Endothelial cell of umbilical vein (primary cell): ENCODE measurements at regions of chr1 and their contacts with region 1.

Region 1: DNA sequence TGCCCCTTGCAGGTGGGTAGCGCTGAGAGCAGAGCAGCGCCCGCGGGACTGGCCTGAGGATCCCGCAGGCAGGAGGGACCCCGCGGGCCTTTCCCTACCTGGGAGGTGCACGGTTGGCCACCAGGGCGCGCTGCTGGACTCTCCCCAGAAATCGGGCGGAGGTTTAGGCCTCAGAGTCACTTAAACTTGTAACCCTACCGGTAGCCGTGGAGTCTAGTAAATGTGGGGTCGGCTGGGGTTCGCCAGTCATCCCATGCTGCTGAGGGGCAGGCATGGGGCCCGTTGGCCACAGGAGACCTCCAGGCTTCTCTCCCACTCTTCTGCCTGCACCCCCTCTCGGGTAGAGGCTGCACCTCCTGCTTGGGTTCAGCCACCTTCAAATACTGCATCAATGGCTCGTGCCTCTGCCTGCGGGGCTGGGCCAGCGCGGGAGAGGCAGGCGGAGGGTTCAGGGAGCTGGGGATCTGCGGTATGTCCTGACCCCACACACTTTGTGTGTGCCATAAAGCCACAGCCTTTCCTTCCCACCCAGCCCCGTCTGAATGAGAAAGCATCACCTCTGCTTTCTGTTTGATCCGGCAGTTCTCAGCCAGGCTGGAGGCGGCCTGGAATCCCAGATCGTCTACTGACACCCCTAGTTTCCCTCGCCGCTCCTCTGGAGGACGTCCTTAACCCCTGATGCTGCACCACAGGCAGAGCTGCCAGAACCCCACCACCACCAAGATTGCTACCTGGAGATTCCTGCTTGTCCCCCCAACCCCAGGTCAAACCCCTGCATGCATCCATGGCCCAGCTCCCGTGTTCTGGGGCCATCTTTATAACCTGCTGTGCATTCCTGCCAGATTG is 12.3 kb upstream of the GSTM4 start:
- DNase-seq: peak; percentile 63
- H3K4me3 ChIP-seq: no peak overlapping the region
- H3K27ac ChIP-seq: no peak overlapping the region
- H3K4me1 ChIP-seq: no peaks in the 10 kb centered on the region
- H3K27me3 ChIP-seq: no peaks in the 10 kb centered on the region
- CTCF ChIP-seq: peak; percentile 86 to 97
- POLR2A ChIP-seq: no peak

Region 2: GRCh38 chr1:109083923-109084322 is 559.7 kb before region 1 on chr1:
- CTCF ChIA-PET with region 1: no interaction called
- POLR2A ChIA-PET with region 1: no interaction called
- dilution Hi-C with region 1: no loop called
- intact Hi-C with region 1: no loop called
- DNase-seq: no peak
- H3K4me3 ChIP-seq: no peak overlapping the region
- H3K27ac ChIP-seq: no peak overlapping the region
- H3K4me1 ChIP-seq: peaks cover 9% of the 10 kb centered on the region
- H3K27me3 ChIP-seq: no peaks in the 10 kb centered on the region
- CTCF ChIP-seq: no peak
- POLR2A ChIP-seq: no peak

Region 3: GRCh38 chr1:109361649-109362048 is 282.0 kb before region 1 on chr1:
- CTCF ChIA-PET with region 1: no interaction called
- POLR2A ChIA-PET with region 1: no interaction called
- dilution Hi-C with region 1: no loop called
- intact Hi-C with region 1: no loop called
- DNase-seq: no peak
- H3K4me3 ChIP-seq: no peak overlapping the region
- H3K27ac ChIP-seq: no peak overlapping the region
- H3K4me1 ChIP-seq: no peaks in the 10 kb centered on the region
- H3K27me3 ChIP-seq: peaks cover 4 to 13% of the 10 kb centered on the region in 2 experiments
- CTCF ChIP-seq: no peak
- POLR2A ChIP-seq: no peak

Region 4: DNA sequence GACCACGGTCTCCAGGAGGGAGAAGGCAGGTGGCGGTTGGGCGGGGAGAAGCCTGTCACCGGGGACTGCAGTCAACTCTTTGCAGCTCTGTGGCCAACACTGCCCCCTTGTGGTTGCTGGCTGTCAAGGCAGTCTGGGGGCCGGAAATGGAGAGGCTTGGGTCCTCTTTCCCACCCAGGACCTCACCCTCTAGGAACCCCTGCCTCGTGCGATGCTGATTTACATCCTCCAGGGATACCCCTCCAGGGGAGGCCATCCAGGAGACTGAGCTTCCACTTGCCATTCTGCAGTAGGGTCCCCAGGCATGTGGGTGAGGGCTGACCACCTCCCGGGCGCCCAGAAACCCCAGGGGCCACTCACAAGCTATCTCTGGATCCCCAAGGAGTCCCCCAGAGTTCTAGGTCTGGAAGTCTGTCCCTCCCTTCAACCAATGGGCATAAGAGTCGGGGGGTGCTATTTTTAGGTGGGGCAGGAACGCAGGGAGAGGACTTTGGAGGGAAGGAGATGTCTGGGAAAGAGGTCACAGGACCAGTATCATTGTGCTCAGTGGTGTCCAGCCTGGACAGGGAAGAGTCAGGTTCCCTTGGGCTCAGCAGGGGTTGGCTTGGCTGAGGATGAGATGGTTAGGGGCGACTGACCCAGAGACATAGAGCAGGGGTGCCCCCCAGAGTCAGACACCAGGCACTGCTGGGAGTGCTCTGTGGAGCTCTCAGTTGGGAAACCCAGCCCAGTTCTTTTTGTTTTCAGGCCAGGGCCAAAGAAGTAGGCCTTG is 111.1 kb before region 1 on chr1:
- CTCF ChIA-PET with region 1: interaction called, 42 read pairs
- POLR2A ChIA-PET with region 1: no interaction called
- dilution Hi-C with region 1: no loop called
- intact Hi-C with region 1: no loop called
- DNase-seq: peak; percentile 67
- H3K4me3 ChIP-seq: no peak overlapping the region
- H3K27ac ChIP-seq: no peak overlapping the region
- H3K4me1 ChIP-seq: peaks cover 4% of the 10 kb centered on the region
- H3K27me3 ChIP-seq: peaks cover under 1 to 4% of the 10 kb centered on the region in 2 experiments
- CTCF ChIP-seq: peak; percentile 86 to 97
- POLR2A ChIP-seq: no peak

Region 5: GRCh38 chr1:109570417-109570827 is 73.2 kb before region 1 on chr1:
- CTCF ChIA-PET with region 1: interaction called, 16 read pairs
- POLR2A ChIA-PET with region 1: no interaction called
- dilution Hi-C with region 1: no loop called
- intact Hi-C with region 1: no loop called
- DNase-seq: peak; percentile 24
- H3K4me3 ChIP-seq: no peak overlapping the region
- H3K27ac ChIP-seq: no peak overlapping the region
- H3K4me1 ChIP-seq: peaks cover 12% of the 10 kb centered on the region
- H3K27me3 ChIP-seq: no peaks in the 10 kb centered on the region
- CTCF ChIP-seq: no peak
- POLR2A ChIP-seq: no peak

Region 6: DNA sequence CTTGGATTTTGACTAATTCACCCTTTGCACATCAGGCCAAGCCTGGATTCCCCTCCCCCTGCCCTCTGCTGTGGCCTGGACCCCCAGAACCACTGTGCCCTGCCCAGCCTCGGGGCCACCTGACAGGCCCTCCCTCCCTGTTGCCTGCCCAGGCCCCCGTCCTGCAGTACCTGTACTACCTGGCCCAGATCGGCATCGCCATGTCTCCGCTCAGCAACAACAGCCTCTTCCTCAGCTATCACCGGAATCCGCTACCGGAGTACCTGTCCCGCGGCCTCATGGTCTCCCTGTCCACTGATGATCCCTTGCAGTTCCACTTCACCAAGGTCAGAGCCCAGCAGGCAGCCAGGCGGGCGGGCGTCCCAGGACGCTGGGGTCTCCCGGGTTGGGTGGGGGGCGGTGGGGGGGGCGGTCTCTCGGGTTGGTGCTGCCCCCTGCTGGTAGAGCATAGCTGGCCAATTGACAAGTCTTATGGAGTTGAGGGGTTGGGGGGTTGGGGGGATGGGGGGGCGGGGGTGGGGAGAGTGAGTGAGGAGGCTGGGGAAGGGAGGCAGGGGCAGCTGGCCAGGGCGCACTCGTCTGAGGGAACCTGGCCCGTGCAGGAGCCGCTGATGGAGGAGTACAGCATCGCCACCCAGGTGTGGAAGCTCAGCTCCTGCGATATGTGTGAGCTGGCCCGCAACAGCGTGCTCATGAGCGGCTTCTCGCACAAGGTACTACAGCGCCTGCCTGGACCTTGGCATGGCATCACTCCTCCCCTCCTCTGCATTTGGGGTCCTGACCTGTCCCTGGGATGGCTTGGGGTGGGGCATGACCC is 13.3 kb before region 1 on chr1:
- CTCF ChIA-PET with region 1: interaction called, 66 read pairs
- POLR2A ChIA-PET with region 1: no interaction called
- dilution Hi-C with region 1: no loop called
- intact Hi-C with region 1: no loop called
- DNase-seq: no peak
- H3K4me3 ChIP-seq: no peak overlapping the region
- H3K27ac ChIP-seq: no peak overlapping the region
- H3K4me1 ChIP-seq: no peaks in the 10 kb centered on the region
- H3K27me3 ChIP-seq: no peaks in the 10 kb centered on the region
- CTCF ChIP-seq: peak in 1 of 2 donors; percentile 26
- POLR2A ChIP-seq: no peak

Region 7: DNA sequence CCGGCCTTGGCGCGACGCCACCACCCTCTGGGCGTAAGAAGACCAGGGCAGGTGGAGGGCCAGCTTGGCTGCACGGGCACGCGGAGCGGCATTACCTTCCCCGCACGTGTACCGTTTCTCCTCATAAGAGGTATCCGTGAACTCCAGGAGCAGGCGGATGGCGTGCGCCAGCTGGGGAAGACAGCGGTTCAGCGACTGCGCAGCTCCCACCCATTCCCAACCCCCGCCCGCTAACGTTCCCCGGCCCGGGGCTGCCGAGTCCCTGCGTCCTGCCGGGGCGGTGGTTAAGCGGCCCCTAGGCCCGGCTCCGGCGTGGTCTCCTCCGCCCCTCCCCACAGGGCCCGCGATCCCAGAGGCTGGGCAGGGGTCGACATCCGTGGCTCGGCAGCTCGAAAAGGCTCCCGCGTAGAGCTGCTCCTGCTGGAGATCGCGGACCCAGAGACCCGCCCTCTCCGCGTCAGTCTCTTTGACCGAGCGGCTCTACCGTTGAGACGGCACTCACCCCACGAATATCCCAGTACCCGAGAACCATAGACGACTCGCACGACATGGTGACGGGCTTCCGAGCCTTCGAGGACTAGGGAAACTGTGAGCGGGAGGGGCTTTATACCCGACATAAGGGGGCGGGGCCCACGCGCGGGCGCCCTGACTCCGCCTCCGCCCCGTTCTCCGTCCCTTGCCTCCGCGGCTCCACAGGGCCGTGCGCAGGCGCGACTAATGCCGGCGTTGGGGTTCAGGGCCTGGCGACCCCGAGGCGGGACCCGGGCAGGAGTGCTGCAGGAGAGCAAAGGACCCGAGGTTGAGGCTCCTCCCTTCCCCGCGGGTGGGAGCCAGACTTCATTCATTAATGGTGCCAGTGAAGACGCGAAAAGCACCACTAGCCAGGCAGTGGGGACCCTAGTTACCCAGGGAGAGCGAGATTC is 96.4 kb after region 1 on chr1:
- CTCF ChIA-PET with region 1: interaction called, 10 read pairs
- POLR2A ChIA-PET with region 1: interaction called, 5 read pairs
- dilution Hi-C with region 1: no loop called
- intact Hi-C with region 1: no loop called
- DNase-seq: peak; percentile 81
- H3K4me3 ChIP-seq: peak overlapping the region; percentile 41 to 69 (median 42)
- H3K27ac ChIP-seq: peak overlapping the region; percentile 17
- H3K4me1 ChIP-seq: peaks cover 12% of the 10 kb centered on the region
- H3K27me3 ChIP-seq: peaks cover 0 to 1% of the 10 kb centered on the region in 2 experiments
- CTCF ChIP-seq: no peak
- POLR2A ChIP-seq: peak; percentile 67

Region 8: DNA sequence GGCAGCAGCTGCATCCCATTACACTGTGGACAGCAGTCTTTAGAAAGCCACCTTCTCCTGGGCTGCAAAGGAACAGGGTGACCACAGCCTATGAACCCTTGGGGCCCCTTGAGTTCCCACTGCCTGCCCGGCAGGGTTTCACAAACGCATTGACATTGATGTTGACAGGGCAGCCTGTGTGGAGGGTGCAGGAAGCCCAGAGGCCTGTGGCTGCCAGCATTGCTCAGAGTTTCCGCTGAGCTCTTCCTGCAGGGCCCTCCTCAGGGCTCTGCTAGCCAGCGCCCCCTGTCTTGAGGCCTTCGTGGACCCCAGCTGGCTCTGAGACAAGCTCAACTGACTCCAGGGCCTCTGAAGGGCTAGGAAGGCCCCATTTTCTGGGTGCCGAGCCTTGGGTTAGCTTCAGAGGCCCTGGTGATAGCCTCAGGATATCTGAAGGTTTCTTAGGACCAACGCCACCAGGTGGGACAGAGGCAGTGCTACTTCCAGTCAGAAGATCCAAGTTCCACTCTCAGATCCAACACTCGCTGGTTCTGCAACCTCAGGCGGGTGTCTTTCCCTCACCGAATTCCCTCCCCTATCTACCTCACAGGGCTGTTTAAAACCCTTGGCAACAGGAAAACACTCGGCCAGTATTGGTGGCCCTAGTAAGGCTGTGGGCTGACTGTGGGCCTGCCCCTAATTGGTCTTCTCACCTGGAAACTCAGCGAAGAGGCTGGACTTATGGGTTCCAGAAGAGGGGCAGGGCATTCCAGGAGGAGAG is 147.3 kb after region 1 on chr1:
- CTCF ChIA-PET with region 1: interaction called, 22 read pairs
- POLR2A ChIA-PET with region 1: no interaction called
- dilution Hi-C with region 1: no loop called
- intact Hi-C with region 1: no loop called
- DNase-seq: peak; percentile 90
- H3K4me3 ChIP-seq: no peak overlapping the region
- H3K27ac ChIP-seq: peak overlapping the region; percentile 52
- H3K4me1 ChIP-seq: peaks cover 38% of the 10 kb centered on the region
- H3K27me3 ChIP-seq: no peaks in the 10 kb centered on the region
- CTCF ChIP-seq: peak; percentile 83 to 88
- POLR2A ChIP-seq: no peak